PC-3 (cell line): ENCODE measurements at regions of chr11 and their contacts with region 1.

Region 1: GRCh38 chr11:73350908-73351636 is 25.1 kb upstream of the RELT start:
- DNase-seq: peak; percentile 81
- ATAC-seq: peak; percentile 79
- H3K4me3 ChIP-seq: peak overlapping the region; percentile 18; the same call in 1 of the 2 replicates
- H3K27ac ChIP-seq: no peak overlapping the region
- H3K4me1 ChIP-seq: no peaks in the 10 kb centered on the region
- H3K27me3 ChIP-seq: no peaks in the 10 kb centered on the region
- CTCF ChIP-seq: peak; percentile 99

Region 2: GRCh38 chr11:73376160-73376802 is 25.2 kb after region 1 on chr11 and contains the start of gene RELT:
- CTCF ChIA-PET with region 1: interaction called, 7 read pairs
- POLR2A ChIA-PET with region 1: no interaction called
- intact Hi-C with region 1: loop called (anchors 1 kb)
- DNase-seq: peak; percentile 98
- ATAC-seq: peak; percentile 87
- H3K4me3 ChIP-seq: peak within 1 kb of the TSS; percentile 99
- H3K27ac ChIP-seq: peak within 1 kb of the TSS; percentile 39
- H3K4me1 ChIP-seq: peaks cover 28% of the 10 kb centered on the region
- H3K27me3 ChIP-seq: no peaks in the 10 kb centered on the region
- CTCF ChIP-seq: peak; percentile 89
- total RNA-seq, gene RELT: 24.5 and 34.0 TPM in 2 replicates

Region 3: DNA sequence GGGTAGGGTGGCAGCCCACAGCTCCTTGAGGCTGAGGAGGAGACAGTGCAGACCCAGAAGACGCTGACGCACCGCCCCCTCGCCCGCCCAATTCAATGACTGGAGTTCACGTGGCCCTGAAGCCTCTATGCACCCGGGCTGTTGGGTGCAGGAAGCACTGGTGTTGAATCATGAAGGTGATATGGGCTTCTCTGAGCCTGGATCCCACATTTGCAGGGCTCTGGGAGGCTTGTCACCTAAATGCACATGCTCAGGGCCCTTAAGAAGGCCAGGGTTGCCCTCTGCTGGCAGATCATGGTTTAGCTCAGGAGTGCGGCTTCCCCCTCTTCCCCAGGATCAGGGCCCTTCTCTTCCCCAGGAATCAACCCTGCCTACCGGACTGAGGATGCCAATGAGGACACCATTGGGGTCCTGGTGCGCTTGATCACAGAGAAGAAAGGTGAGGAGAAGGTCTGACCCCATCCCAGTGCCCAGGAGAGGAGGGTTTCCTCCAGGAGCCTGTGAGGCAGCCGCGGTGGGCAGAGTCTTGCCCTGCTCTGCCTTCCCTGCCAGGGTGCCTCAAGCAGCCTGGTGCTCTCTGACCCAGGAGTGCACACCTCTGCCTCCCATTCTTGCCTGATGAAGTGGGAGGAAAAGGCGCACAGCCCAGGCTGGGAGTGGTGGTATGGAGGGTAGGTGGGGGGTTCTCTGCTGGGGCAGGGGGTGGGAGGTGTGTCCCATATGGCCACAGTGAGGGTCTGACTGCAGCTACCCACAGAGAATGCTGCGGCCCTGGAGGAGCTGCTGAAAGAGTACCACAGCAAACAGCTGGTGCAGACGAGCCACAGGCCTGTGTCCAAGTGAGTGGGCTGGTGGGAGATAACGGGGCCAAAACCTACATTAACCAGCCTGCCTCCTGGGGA is 42.7 kb after region 1 on chr11:
- CTCF ChIA-PET with region 1: interaction called, 55 read pairs
- POLR2A ChIA-PET with region 1: no interaction called
- intact Hi-C with region 1: loop called (anchors 1 kb)
- DNase-seq: peak; percentile 84
- ATAC-seq: peak; percentile 85
- H3K4me3 ChIP-seq: no peak overlapping the region
- H3K27ac ChIP-seq: no peak overlapping the region
- H3K4me1 ChIP-seq: no peaks in the 10 kb centered on the region
- H3K27me3 ChIP-seq: no peaks in the 10 kb centered on the region
- CTCF ChIP-seq: peak; percentile 93

Region 4: GRCh38 chr11:73633999-73634398 is 282.9 kb after region 1 on chr11:
- CTCF ChIA-PET with region 1: no interaction called
- POLR2A ChIA-PET with region 1: no interaction called
- intact Hi-C with region 1: no loop called
- DNase-seq: no peak
- ATAC-seq: no peak
- H3K4me3 ChIP-seq: no peak overlapping the region
- H3K27ac ChIP-seq: no peak overlapping the region
- H3K4me1 ChIP-seq: no peaks in the 10 kb centered on the region
- H3K27me3 ChIP-seq: no peaks in the 10 kb centered on the region
- CTCF ChIP-seq: no peak